OCI-LY7 (cell line): ENCODE measurements at regions of chr20 and their contacts with region 1.

Region 1: GRCh38 chr20:7859356-7859802 is 80.9 kb downstream of the HAO1 start:
- DNase-seq: peak; percentile 78
- H3K4me3 ChIP-seq: no peak overlapping the region
- H3K27ac ChIP-seq: peak overlapping the region; percentile 27
- H3K4me1 ChIP-seq: peaks cover 30% of the 10 kb centered on the region
- CTCF ChIP-seq: peak; percentile 93

Region 2: DNA sequence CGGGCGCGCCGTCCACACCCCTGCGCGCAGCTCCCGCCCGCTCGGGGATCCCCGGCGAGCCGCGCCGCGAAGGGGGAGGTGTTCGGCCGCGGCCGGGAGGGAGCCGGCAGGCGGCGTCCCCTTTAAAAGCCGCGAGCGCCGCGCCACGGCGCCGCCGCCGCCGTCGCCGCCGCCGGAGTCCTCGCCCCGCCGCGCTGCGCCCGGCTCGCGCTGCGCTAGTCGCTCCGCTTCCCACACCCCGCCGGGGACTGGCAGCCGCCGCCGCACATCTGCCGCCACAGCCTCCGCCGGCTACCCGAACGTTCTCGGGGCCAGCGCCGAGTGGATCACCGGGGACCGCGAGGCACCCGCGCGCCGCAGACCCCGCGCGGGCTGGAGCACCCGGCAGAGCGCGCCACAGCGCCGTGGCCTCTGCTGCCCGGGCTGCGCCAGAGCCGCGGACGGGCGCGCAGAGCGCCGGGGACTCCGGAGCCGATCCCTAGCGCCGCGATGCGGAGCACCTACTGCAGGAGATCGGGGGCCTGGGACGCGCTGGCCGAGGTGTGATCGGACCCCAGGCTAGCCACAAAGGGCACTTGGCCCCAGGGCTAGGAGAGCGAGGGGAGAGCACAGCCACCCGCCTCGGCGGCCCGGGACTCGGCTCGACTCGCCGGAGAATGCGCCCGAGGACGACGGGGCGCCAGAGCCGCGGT is 1091.7 kb before region 1 on chr20 and contains the start of gene BMP2:
- CTCF ChIA-PET with region 1: no interaction called
- POLR2A ChIA-PET with region 1: no interaction called
- intact Hi-C with region 1: loop called (anchors 5 kb)
- DNase-seq: no peak
- H3K4me3 ChIP-seq: peak within 1 kb of the TSS; percentile 61
- H3K27ac ChIP-seq: no peak within 1 kb of the TSS
- H3K4me1 ChIP-seq: no peaks in the 10 kb centered on the region
- CTCF ChIP-seq: no peak
- total RNA-seq, gene BMP2: not detected in 2 replicates

Region 3: DNA sequence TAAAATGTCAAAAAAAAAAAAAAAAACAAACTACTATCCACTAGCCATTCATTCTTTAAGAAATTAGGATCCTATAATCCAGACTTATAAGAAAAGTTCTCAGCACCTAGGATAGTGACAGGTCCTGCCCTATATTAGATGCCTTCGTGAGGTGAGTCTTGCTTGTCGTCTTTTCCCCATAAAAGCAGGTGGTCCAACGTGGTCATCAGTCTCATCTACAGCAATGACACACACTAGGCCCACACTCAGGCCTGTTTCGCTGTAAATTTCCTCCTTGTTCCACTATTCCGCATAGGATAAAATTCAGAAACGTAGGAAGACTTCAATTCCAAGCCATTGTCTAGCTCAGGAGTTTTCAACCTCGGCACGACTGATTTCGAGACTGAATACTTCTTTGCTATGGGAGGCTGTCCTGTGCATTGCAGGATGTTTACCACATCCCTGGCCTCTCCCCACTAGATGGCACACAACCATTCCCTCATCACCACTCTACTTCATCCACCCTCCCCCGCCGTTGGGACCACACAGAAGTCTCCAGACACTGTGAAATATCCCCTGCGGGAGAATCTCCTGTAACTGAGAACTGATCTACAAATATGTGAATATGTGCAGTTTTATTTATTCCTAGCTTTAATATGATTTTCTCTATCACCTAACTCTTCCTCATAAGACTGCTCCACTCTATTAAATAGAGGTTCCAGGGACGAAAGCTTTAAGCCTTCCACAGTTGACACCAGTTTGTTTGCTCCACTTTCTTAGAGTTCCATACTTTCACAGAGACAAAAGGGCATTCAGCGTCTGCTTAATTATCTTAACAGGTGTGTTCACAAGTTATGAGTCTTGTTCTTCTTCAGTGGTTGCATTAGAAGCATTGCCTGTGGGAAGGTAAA is 745.6 kb before region 1 on chr20:
- CTCF ChIA-PET with region 1: interaction called, 3 read pairs
- POLR2A ChIA-PET with region 1: no interaction called
- intact Hi-C with region 1: loop called (anchors 5 kb)
- DNase-seq: peak; percentile 37
- H3K4me3 ChIP-seq: no peak overlapping the region
- H3K27ac ChIP-seq: no peak overlapping the region
- H3K4me1 ChIP-seq: no peaks in the 10 kb centered on the region
- CTCF ChIP-seq: peak; percentile 71

Region 4: GRCh38 chr20:7358670-7359069 is 500.7 kb before region 1 on chr20:
- CTCF ChIA-PET with region 1: no interaction called
- POLR2A ChIA-PET with region 1: no interaction called
- intact Hi-C with region 1: loop called (anchors 1 kb)
- DNase-seq: peak; percentile 31
- H3K4me3 ChIP-seq: no peak overlapping the region
- H3K27ac ChIP-seq: no peak overlapping the region
- H3K4me1 ChIP-seq: no peaks in the 10 kb centered on the region
- CTCF ChIP-seq: peak; percentile 69

Region 5: GRCh38 chr20:7617797-7618196 is 241.6 kb before region 1 on chr20:
- CTCF ChIA-PET with region 1: no interaction called
- POLR2A ChIA-PET with region 1: interaction called, 3 read pairs
- intact Hi-C with region 1: loop called (anchors 10 kb)
- DNase-seq: no peak
- H3K4me3 ChIP-seq: no peak overlapping the region
- H3K27ac ChIP-seq: no peak overlapping the region
- H3K4me1 ChIP-seq: no peaks in the 10 kb centered on the region
- CTCF ChIP-seq: no peak

Region 6: DNA sequence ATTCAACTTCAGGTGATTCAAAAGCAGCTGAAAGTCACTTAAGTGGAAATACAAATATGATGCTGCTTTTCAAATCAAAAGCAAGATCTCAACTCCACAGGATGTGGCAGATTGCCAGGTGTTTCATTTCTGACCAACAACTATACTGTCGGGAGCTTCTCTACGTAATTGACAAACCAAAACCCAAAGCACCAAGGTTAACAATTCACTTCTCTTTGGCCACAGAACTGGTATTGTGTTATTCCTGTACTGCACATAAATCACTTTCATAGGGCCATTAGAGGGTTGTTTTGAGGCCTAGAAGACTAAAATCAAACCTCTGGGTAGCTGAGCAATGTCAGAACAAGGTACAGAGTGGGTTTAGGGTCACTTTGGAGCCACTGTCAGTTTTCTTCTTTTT is 88.8 kb before region 1 on chr20:
- CTCF ChIA-PET with region 1: interaction called, 3 read pairs
- POLR2A ChIA-PET with region 1: interaction called, 3 read pairs
- intact Hi-C with region 1: loop called (anchors 2 kb)
- DNase-seq: peak; percentile 97
- H3K4me3 ChIP-seq: peak overlapping the region; percentile 41
- H3K27ac ChIP-seq: peak overlapping the region; percentile 99
- H3K4me1 ChIP-seq: peaks cover 67% of the 10 kb centered on the region
- CTCF ChIP-seq: no peak